Activated CD8-positive, alpha-beta T cell treated with anti-CD3 and anti-CD28 coated beads for 36 hours (primary cell): ENCODE measurements at regions of chr22 and their contacts with region 1.

Region 1: DNA sequence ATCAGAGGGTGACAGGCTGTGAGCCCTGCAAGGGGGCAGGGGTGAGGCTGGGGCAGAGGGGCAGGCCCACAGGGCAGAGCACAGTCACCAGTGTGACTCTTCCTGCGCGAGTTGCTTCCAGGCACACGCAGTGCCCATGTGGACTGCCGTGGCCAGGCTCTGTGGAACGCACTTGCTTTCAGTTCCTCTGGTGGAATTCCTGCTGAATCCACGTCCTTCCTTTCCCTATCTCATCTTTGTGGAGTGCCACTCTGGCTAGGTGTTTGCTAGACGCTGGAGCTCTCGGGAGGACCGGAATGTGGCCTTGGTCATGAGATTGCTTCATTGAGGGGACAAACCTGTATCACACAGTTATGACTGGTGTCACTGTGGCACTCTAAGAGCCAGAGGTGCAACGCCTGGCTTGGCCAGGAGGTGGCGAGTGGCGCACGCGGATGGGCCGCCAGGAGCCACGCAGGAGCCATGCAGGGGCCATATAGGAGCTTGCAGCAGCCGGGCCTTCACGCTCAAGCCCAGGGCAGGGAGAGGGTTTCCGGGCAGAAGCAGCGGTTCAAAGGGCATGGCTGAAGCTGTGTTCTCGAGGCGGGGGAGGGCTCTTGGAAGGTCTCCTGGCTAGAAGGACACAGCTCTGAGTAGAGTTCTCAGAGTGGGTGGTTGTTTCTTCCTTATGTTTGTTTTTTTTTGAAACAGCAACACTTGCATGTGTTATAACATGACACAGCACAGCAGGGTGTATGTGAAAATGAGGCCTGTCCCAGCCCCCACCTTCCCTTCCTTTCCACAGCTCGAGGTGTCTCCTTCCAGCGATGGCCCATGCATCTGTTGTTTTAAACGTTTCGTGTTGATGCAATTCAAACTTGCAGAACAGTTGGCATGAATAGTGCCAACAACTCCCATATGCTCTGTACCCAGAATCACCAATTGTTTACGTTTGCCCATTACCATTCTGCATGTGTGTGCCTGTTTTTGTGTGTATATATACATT is 36.2 kb downstream of the TBC1D22A start:
- DNase-seq: peak; percentile 85
- ATAC-seq: peak; percentile 94
- H3K4me3 Mint-ChIP-seq: no peak overlapping the region
- H3K27ac Mint-ChIP-seq: peak overlapping the region; percentile 73
- H3K4me1 Mint-ChIP-seq: peaks cover 26% of the 10 kb centered on the region
- H3K27me3 Mint-ChIP-seq: no peaks in the 10 kb centered on the region
- CTCF ChIP-seq: peak; percentile 92

Region 2: GRCh38 chr22:46563381-46564083 is 235.1 kb before region 1 on chr22:
- CTCF ChIA-PET with region 1: interaction called, 22 read pairs
- POLR2A ChIA-PET with region 1: no interaction called
- intact Hi-C with region 1: no loop called
- DNase-seq: peak; percentile 87
- ATAC-seq: peak; percentile 86
- H3K4me3 Mint-ChIP-seq: no peak overlapping the region
- H3K27ac Mint-ChIP-seq: no peak overlapping the region
- H3K4me1 Mint-ChIP-seq: peaks cover 8% of the 10 kb centered on the region
- H3K27me3 Mint-ChIP-seq: no peaks in the 10 kb centered on the region
- CTCF ChIP-seq: peak; percentile 82

Region 3: DNA sequence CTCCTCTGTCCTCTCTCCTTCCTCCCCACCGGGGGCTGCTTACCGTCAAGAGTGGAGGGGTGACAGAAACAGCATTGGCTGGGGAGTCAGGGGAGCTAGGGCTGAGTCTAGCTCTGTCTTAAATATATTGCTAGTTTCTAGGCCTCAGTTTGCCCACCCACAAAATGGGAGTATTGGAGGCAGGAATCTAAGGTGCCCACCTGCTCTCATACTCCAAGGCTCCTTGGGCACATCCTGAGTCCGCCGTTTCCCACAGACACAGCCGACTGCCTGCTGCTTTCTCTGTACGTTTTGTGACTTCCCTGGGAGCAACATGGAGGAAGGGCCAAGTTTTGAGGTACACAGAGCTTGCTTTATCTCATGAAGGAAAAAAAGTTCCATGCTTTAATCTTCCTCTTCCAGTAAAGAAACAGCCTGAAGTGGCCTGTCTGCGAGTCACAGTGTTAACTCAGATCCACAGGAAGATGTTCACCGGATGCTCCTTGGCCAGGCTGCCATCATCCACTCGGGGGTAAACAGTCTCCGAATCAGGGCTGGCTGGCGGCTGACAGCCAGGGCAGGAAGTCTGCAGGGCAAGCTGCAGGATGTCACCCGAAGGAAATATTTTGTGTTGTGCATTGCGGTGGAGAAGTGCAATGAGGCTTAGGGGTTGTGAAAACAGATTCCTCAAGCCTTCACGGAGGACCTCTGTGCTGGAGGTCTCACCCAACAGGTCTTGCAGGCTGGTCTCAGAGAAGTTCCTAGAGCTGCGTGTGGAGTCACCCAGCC is 49.6 kb before region 1 on chr22:
- CTCF ChIA-PET with region 1: interaction called, 11 read pairs
- POLR2A ChIA-PET with region 1: interaction called, 3 read pairs
- intact Hi-C with region 1: no loop called
- DNase-seq: peak; percentile 72
- ATAC-seq: peak; percentile 88
- H3K4me3 Mint-ChIP-seq: peak overlapping the region; percentile 51
- H3K27ac Mint-ChIP-seq: peak overlapping the region; percentile 87
- H3K4me1 Mint-ChIP-seq: peaks cover 27% of the 10 kb centered on the region
- H3K27me3 Mint-ChIP-seq: no peaks in the 10 kb centered on the region
- CTCF ChIP-seq: no peak

Region 4: DNA sequence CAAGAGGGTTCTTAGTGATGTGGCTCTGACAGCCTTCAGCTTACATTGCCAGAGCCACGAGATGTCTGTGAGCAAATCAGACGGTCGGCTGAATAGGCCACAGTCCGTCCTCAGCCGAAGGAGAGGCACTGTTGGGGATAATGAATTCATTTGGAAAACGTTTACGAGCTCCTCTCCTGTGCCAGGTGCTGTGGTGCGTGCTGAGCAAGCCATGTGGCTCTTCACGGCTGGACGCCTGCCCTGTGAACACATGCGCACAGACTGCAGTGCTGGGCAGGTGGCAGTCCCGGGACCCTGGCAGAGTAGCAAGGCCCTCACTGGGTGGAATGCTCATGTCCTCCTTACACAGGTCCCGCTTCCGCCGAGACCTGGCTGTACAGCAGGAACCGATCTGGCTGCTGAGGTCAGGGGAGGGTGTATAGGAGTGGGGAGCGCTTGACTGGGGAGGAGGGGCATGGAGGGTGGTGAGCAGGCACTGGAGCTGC is 29.4 kb before region 1 on chr22:
- CTCF ChIA-PET with region 1: interaction called, 191 read pairs
- POLR2A ChIA-PET with region 1: interaction called, 3 read pairs
- intact Hi-C with region 1: no loop called
- DNase-seq: no peak
- ATAC-seq: no peak
- H3K4me3 Mint-ChIP-seq: no peak overlapping the region
- H3K27ac Mint-ChIP-seq: peak overlapping the region; percentile 91
- H3K4me1 Mint-ChIP-seq: peaks cover 73% of the 10 kb centered on the region
- H3K27me3 Mint-ChIP-seq: no peaks in the 10 kb centered on the region
- CTCF ChIP-seq: no peak

Region 5: DNA sequence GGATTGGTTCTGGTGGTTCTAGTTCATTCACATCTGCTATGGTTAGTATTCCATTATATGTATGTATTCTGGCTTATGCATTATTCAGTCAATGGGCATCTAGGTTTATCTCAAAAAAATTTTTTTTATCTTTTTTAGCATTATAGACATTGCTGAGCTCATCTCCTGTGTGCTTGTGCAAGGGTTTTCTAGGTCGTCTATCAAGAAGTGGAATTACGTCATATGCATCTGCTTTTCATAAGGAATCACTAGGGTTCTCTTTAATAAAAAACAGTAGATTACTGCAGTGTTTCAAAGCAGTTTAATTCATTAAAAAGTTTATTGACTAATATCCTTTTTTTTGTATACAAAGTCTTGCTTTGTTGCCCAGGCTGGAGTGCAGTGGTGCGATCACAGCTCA is 14.9 kb before region 1 on chr22:
- CTCF ChIA-PET with region 1: interaction called, 22 read pairs
- POLR2A ChIA-PET with region 1: interaction called, 4 read pairs
- intact Hi-C with region 1: no loop called
- DNase-seq: no peak
- ATAC-seq: no peak
- H3K4me3 Mint-ChIP-seq: no peak overlapping the region
- H3K27ac Mint-ChIP-seq: no peak overlapping the region
- H3K4me1 Mint-ChIP-seq: peaks cover 25% of the 10 kb centered on the region
- H3K27me3 Mint-ChIP-seq: no peaks in the 10 kb centered on the region
- CTCF ChIP-seq: no peak

Region 6: DNA sequence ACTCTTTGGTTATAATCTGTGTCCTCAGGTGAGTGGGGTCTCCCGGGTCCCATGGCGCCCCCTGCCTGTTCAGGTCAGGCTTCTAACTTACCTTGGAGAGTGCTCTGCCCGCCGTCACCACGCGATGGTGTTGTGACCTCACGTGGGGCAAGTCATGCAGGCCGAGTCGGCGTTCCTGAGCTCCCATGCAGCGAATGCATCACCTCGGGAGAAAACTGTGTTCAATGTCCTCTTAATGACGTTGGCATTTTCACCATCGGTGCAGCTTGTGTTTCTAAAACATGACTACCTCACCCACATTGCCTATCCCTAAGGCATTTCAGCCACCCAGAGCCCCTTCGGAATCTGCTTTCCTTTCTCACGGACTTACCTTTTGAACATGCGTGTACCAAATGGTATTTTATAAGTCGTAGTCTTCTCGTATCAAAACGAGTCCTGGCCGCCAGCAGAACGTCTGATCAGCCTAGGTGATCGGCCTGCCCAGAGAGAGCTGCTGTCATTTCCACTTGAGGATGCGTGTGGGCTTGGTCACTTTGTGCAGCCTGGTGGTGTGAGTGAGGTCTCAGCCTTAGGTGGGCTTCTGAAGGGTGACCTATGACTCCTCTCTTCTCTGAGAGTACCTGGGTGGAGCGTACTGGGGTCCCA is 28.6 kb after region 1 on chr22:
- CTCF ChIA-PET with region 1: interaction called, 26 read pairs
- POLR2A ChIA-PET with region 1: no interaction called
- intact Hi-C with region 1: no loop called
- DNase-seq: peak; percentile 19
- ATAC-seq: no peak
- H3K4me3 Mint-ChIP-seq: no peak overlapping the region
- H3K27ac Mint-ChIP-seq: no peak overlapping the region
- H3K4me1 Mint-ChIP-seq: peaks cover 11% of the 10 kb centered on the region
- H3K27me3 Mint-ChIP-seq: no peaks in the 10 kb centered on the region
- CTCF ChIP-seq: no peak